CD14-positive monocyte (primary cell): ENCODE measurements at regions of chr2 and their contacts with region 1.

Region 1: DNA sequence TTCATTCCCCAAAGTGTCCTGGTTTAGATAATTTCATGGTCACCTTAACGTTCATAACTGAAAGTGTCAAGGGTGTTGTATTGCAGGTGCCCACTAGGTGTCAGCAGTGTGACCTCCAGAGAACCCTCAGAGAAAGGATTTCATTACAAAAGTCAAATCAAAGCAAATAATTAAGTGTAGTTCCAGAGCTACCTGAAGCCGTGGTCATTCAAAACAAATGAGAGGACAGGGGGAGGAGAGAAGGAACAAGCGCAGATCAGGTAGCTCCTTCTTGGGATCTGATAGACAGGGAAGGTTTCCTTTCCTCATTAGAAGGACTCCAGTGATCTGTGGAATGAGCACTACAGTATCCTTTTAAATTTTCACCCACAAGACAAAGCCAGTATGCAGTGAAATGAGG is at the start of gene SLC9A4:
- DNase-seq: peak; percentile 27 to 36 (median 34)
- H3K4me3 ChIP-seq: no peak within 1 kb of the TSS
- H3K4me3 Mint-ChIP-seq: no peak within 1 kb of the TSS
- H3K27ac ChIP-seq: no peak within 1 kb of the TSS
- H3K27ac Mint-ChIP-seq: no peak within 1 kb of the TSS
- H3K4me1 ChIP-seq: no peaks in the 10 kb centered on the region
- H3K4me1 Mint-ChIP-seq: no peaks in the 10 kb centered on the region
- H3K27me3 ChIP-seq: peaks cover 10 to 15% of the 10 kb centered on the region in 2 donors
- H3K27me3 Mint-ChIP-seq: peaks cover 1 to 24% (median 5%) of the 10 kb centered on the region in 3 donors
- CTCF ChIP-seq: peak; percentile 93
- polyA plus RNA-seq, gene SLC9A4: not detected

Region 2: DNA sequence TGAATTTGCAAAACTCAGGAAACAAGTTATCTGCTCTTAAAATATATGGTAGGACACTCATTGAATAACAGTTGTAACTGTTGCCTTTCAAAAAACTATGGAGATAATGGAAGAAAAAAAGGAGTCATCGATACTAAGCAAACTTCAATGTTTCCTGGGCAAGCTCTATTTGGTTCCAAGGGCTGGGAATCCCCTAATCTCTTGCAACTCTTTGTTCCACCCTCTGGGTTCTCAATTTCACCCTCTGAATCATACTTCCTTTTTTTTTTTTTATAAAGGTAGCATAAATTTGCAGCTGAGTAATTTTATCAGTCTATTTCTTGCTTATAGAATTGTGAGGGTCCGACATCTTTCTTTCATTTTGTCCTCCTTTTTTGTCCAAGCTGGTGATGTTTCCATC is 36.7 kb after region 1 on chr2:
- intact Hi-C with region 1: no loop called
- DNase-seq: peak; percentile 72 to 91 (median 86)
- H3K4me3 ChIP-seq: peak overlapping the region in 1 of 3 experiments; percentile 43
- H3K4me3 Mint-ChIP-seq: peak overlapping the region in 1 of 2 donors; percentile 43
- H3K27ac ChIP-seq: peak overlapping the region in 1 of 2 donors; percentile 84
- H3K27ac Mint-ChIP-seq: peak overlapping the region; percentile 83 to 96 (median 86)
- H3K4me1 ChIP-seq: peaks cover 19 to 30% of the 10 kb centered on the region in 2 donors
- H3K4me1 Mint-ChIP-seq: peaks cover 23% of the 10 kb centered on the region
- H3K27me3 ChIP-seq: no peaks in the 10 kb centered on the region
- H3K27me3 Mint-ChIP-seq: peaks cover 3 to 11% (median 8%) of the 10 kb centered on the region in 3 donors
- CTCF ChIP-seq: no peak

Region 3: GRCh38 chr2:102520028-102520427 is 47.0 kb after region 1 on chr2:
- intact Hi-C with region 1: no loop called
- DNase-seq: peak; percentile 21 to 47 (median 32)
- H3K4me3 ChIP-seq: no peak overlapping the region
- H3K4me3 Mint-ChIP-seq: no peak overlapping the region
- H3K27ac ChIP-seq: no peak overlapping the region
- H3K27ac Mint-ChIP-seq: no peak overlapping the region
- H3K4me1 ChIP-seq: no peaks in the 10 kb centered on the region
- H3K4me1 Mint-ChIP-seq: no peaks in the 10 kb centered on the region
- H3K27me3 ChIP-seq: no peaks in the 10 kb centered on the region
- H3K27me3 Mint-ChIP-seq: peaks cover 4 to 6% (median 4%) of the 10 kb centered on the region in 3 donors
- CTCF ChIP-seq: peak; percentile 80

Region 4: GRCh38 chr2:102592597-102592996 is 119.6 kb after region 1 on chr2:
- intact Hi-C with region 1: loop called in 1 of 2 experiments (anchors 5 kb)
- DNase-seq: peak in 2 of 3 donors; percentile 7 to 10
- H3K4me3 ChIP-seq: no peak overlapping the region
- H3K4me3 Mint-ChIP-seq: no peak overlapping the region
- H3K27ac ChIP-seq: no peak overlapping the region
- H3K27ac Mint-ChIP-seq: no peak overlapping the region
- H3K4me1 ChIP-seq: no peaks in the 10 kb centered on the region
- H3K4me1 Mint-ChIP-seq: no peaks in the 10 kb centered on the region
- H3K27me3 ChIP-seq: peaks cover 2 to 3% of the 10 kb centered on the region in 2 donors
- H3K27me3 Mint-ChIP-seq: peaks cover 0 to 12% (median 9%) of the 10 kb centered on the region in 3 donors
- CTCF ChIP-seq: peak; percentile 54